BJ (cell line): ENCODE measurements at regions of chr17 and their contacts with region 1.

Region 1: DNA sequence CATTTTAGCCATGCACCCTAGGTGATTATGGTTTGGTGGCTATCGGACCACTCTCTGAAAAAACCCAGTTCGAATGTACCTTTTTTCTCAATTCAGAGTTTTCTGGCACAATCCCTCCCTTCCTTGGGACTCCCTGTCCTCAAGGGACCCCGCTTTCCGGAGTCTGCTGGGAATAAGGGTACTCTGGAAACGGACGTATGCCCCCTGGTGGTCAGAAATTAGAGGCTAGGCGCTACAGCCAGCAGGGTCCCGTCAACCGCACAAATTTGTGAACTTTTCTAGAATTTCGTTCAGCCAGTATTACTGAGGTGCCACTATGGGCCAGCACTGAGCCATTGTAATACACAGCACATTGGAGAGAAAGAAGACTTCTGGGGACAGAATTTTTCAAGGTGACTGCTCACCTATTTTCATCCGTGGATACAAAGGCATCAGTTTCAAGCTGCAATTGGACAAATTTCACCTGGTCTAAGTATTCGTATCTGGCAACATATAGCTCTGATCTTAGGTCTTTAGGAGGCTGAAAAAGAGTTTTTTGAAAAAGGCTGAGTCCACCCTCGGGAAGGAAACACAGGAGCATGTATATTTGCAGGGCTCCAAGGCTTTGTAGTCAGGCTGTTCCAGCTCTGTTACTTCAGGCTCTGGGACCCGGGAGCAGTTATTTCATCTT is 27.1 kb upstream of the CRYBA1 start:
- DNase-seq: no peak
- H3K4me3 ChIP-seq: no peak overlapping the region
- H3K27me3 ChIP-seq: no peaks in the 10 kb centered on the region
- CTCF ChIP-seq: peak; percentile 97

Region 2: DNA sequence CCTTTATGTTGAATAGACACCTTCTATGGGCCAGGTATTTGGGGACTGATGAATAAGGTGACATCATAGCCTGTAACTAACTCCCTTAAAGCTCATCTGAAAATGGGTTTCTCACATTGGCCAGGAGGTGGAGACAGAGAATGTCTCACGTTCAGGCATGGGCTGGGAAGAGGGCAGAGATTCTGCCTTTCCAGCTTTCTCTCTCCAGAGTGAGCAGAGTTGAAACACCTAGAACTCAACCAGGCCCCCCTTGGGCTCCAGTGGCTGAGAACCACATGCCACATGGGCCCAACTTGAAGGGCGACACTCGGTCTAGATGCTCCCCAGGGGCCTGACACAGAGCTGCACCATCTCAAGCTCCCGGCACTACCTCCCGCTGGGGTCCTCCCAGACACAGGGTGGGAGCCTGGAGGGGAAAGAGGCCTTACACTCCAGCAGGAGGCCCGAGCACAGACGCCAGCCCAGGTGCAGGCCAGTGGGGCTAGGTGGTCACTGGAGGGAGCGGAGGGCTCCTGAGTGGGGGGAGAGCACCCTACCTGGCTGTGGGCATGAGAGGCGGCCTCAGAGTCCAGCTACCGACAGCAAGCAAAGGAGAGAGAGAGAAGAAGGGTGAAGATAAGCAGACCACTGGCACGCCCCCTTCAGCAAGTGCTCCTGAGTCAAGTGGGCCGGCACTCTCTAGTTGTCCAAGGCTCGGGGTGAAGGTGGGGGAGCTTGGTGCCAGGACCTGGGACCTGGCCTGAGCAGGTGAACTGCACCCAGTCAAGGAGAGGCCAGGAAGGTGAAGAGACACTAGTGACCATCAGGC is 95.2 kb before region 1 on chr17:
- CTCF ChIA-PET with region 1: interaction called, 29 read pairs
- POLR2A ChIA-PET with region 1: no interaction called
- DNase-seq: no peak
- H3K4me3 ChIP-seq: no peak overlapping the region
- H3K27me3 ChIP-seq: no peaks in the 10 kb centered on the region
- CTCF ChIP-seq: peak; percentile 79

Region 3: DNA sequence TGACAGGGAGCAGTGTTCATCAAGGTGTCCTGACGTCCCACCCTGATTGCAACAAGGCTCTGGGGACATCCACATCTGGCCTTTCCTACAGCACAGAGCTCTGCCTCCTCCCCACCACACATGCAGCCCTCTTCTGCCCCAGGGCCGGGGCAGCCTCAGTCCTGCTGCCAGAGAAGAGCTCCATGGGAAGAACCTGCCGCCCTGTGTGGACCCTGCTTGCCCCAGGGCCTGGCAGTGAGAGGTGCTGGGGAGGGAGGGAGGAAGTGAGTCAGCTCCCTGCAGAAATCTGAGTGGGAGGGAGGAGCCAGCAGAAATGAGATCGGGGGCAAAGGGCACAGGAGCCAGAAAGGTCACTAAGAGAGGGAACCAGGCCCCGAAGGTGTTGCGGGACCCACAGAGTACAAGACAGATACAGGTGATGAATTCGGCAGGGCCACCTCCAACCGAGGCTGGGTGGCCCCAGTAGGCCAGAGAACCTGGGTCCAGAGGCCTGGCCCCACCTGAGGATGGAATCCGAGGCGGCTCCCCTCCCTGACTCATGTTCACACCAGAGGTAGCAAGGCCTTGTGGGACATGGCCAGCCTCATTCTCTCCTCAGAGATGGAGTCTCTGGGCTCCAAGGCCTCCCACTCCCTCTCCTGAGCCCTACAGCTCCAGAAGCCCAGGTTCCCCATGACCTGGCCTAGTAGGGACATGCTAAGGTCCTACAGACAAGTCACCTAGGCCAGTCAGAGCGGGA is 64.1 kb before region 1 on chr17:
- CTCF ChIA-PET with region 1: interaction called, 238 read pairs
- POLR2A ChIA-PET with region 1: no interaction called
- DNase-seq: no peak
- H3K4me3 ChIP-seq: no peak overlapping the region
- H3K27me3 ChIP-seq: no peaks in the 10 kb centered on the region
- CTCF ChIP-seq: no peak

Region 4: GRCh38 chr17:29195465-29196081 is 23.9 kb before region 1 on chr17:
- CTCF ChIA-PET with region 1: interaction called, 29 read pairs
- POLR2A ChIA-PET with region 1: no interaction called
- DNase-seq: no peak
- H3K4me3 ChIP-seq: no peak overlapping the region
- H3K27me3 ChIP-seq: no peaks in the 10 kb centered on the region
- CTCF ChIP-seq: no peak

Region 5: GRCh38 chr17:29233301-29233700 is 13.8 kb after region 1 on chr17:
- CTCF ChIA-PET with region 1: interaction called, 23 read pairs
- POLR2A ChIA-PET with region 1: no interaction called
- DNase-seq: no peak
- H3K4me3 ChIP-seq: no peak overlapping the region
- H3K27me3 ChIP-seq: no peaks in the 10 kb centered on the region
- CTCF ChIP-seq: no peak

Region 6: GRCh38 chr17:29252101-29252866 is 32.8 kb after region 1 on chr17:
- CTCF ChIA-PET with region 1: interaction called, 14 read pairs
- POLR2A ChIA-PET with region 1: no interaction called
- DNase-seq: no peak
- H3K4me3 ChIP-seq: no peak overlapping the region
- H3K27me3 ChIP-seq: no peaks in the 10 kb centered on the region
- CTCF ChIP-seq: peak; percentile 44

Region 7: DNA sequence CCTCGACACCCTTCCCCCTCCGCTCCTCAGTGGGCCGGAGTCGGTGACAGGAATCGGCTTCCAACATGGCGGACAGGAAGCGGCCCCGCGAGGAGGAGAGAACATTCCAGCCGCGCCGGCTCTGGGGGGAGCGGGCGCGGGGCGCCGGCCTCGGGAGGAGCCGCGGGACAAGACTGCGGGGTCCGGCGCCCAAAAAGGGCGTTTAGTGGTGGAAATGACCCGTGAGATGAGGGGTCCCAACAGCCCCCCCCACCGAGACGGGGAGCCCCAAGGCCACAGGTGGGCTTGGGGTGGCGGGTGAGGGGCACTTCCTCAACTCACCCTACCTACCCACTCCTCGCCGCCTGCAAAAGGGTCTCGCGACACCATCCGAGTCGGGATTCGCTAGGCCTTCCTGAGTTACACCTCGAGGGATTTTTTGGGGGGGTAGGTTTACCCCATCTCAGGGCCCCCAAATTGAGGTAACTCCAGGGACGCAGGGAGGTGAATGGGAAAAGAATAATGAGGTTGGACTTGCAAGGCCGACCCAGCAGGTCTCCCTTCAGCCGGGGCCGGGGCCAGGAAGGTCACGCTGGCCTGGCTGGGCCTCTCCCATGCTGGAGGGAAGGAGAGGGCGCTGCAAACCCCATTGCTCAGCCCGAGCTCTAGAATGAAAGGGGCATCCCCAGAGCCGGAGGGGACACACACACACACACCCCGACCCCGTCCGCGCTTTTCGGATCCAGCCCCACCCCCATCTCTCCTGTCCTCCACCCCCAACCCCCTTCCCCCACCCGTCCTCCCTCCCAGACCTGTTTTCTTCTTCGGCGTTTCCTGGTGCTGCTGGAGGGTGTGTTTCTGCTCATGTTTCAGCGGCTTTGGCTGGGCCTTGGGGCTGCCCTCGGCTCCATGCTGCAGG is 73.7 kb after region 1 on chr17:
- CTCF ChIA-PET with region 1: interaction called, 27 read pairs
- POLR2A ChIA-PET with region 1: no interaction called
- DNase-seq: no peak
- H3K4me3 ChIP-seq: peak overlapping the region; percentile 79
- H3K27me3 ChIP-seq: no peaks in the 10 kb centered on the region
- CTCF ChIP-seq: no peak